HEK293 (cell line): ENCODE measurements at regions of chr11 and their contacts with region 1.

Region 1: DNA sequence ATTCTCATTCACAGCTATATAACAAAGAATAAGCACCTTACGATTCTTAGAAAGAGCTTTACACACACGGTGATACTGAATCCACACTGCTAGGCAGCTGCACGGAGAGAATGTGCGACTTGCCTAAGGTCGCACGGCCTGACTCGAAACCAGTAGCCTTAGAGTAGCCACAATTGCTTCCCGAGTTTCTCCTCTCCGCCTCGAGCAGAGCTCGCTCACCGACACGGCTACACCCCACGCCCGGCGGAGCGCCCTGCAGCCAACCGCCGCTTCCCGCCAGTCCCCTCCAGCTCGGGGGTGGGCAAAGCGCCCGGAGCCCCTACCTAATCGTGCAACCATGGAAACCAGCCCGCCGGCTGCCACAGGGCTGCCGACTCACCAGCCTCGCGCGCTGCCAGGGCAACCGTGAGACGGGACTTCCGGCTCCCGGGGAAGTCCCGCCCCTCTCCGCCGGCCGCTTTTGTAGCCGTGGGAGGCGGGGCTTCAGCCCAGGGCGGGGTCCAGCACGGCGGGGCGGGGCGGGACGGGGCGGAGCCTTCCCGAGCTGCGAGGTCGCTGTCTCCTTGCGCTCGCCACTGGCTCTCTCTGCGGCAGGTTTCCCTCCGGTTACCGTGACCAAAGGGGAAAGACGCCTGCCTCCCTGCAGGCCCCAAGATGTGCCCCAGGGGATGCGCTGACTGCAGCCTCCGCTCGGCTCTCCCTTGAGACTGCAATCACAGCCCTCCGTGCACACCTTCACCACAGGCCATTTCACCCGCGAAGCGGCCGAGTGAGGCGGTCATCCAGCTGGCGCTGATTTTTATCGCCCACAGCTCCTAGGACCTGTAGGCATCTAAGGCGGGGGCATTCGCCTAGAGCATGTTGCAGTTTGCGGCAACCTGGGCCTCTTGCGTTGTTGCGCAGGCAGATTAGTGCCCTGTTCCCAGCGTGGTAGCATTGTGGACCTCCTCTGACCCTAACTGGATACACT is 1.1 kb downstream of the BSCL2 start:
- H3K4me3 ChIP-seq: peak overlapping the region; percentile 62
- H3K27ac ChIP-seq: peak overlapping the region; percentile 62
- H3K4me1 ChIP-seq: peaks cover 3% of the 10 kb centered on the region; the same call in 1 of the 2 replicates
- CTCF ChIP-seq: no peak

Region 2: GRCh38 chr11:62411524-62411923 is 294.6 kb before region 1 on chr11:
- CTCF ChIA-PET with region 1: no interaction called
- POLR2A ChIA-PET with region 1: no interaction called
- H3K4me3 ChIP-seq: no peak overlapping the region
- H3K27ac ChIP-seq: no peak overlapping the region
- H3K4me1 ChIP-seq: no peaks in the 10 kb centered on the region
- CTCF ChIP-seq: no peak

Region 3: GRCh38 chr11:62678770-62679696 is 27.1 kb before region 1 on chr11 and contains the start of gene UBXN1:
- CTCF ChIA-PET with region 1: interaction called, 7 read pairs
- POLR2A ChIA-PET with region 1: interaction called, 14 read pairs
- H3K4me3 ChIP-seq: peak within 1 kb of the TSS; percentile 90
- H3K27ac ChIP-seq: peak within 1 kb of the TSS; percentile 62
- H3K4me1 ChIP-seq: peaks cover 8% of the 10 kb centered on the region
- CTCF ChIP-seq: no peak

Region 4: DNA sequence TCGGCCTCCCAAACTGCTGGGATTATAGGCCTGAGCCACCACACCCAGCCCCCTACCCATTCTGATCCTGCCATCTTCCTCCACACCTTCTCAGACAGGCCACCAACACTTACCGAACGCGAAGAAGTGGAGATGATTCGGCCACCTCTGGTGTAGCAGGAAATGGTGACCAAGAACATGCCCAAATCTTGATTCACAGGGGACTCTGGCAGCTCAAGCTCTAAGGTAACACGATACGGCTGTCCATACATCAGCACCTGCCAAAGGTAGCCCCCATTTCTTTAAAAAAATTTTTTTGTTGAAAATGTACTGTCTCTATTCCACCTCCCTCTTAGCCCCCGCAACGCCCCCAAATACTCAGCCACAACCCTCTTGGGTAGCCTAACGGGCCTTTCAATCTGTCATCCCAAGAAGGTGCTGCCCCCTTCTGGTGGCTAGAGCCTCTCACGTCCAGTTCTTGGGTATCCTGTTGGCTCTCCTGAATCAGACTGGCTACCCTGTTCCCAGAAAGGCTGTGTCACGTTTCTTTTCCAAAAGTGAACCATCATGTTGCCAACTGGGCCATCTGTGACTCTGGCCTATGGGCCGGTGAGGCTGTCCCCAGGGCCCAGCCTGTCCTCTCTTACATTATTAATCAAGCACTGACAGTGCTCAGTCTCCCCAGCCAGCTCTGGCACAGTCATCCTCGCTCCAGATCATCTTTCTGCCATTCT is 11.6 kb before region 1 on chr11:
- CTCF ChIA-PET with region 1: interaction called, 12 read pairs
- POLR2A ChIA-PET with region 1: interaction called, 7 read pairs
- H3K4me3 ChIP-seq: no peak overlapping the region
- H3K27ac ChIP-seq: no peak overlapping the region
- H3K4me1 ChIP-seq: no peaks in the 10 kb centered on the region
- CTCF ChIP-seq: peak; percentile 11; the same call in 1 of the 2 replicates

Region 5: GRCh38 chr11:62777389-62777788 is 71.2 kb after region 1 on chr11:
- CTCF ChIA-PET with region 1: no interaction called
- POLR2A ChIA-PET with region 1: interaction called, 10 read pairs
- H3K4me3 ChIP-seq: no peak overlapping the region
- H3K27ac ChIP-seq: no peak overlapping the region
- H3K4me1 ChIP-seq: no peaks in the 10 kb centered on the region
- CTCF ChIP-seq: no peak